MCF 10A (cell line): ENCODE measurements at regions of chr15 and their contacts with region 1.

Region 1: DNA sequence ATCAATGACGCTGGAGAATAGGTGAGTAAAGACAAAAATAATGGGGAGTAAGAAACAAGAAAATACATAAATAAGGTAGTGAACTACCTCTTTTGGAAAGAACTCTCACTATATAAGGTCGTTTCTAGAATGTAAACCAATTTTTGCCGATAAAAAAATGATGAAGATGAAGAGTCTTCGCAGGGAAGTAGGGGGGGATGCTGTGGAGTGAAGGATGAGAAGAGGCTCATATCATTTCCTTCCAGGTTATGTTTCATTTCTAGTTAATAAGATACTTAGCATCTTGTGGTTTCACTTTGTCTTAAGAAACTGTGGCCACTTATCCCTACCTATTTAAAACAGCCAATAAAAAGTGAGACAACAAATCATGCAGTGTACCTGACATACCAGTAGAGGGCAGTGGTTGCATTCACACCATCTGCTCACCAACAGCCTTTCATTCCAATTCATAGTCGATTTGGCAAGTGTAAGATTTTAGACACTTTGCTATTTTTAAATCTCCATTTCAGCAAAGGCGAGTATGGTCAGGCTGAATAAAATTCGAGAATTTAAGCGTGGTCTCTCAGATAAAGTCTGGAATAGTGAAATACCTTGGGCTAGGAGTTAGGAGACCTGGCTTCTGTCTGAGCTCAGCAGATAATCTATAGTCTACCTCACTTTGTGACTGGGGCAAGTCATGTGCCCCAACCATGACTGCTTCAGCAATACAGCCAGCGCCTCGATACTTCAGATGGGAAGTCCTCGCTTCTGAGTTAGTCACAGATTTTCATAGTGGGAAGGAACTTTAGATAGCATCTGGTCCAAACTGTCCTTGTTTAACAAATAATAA is 28.9 kb upstream of the ICE2 start:
- DNase-seq: peak; percentile 76
- H3K4me3 Mint-ChIP-seq: no peak overlapping the region
- H3K27ac Mint-ChIP-seq: no peak overlapping the region
- H3K4me1 Mint-ChIP-seq: no peaks in the 10 kb centered on the region
- H3K27me3 Mint-ChIP-seq: no peaks in the 10 kb centered on the region
- CTCF ChIP-seq: peak; percentile 87

Region 2: GRCh38 chr15:60496853-60497252 is 11.0 kb before region 1 on chr15:
- CTCF ChIA-PET with region 1: interaction called, 28 read pairs
- POLR2A ChIA-PET with region 1: interaction called, 4 read pairs
- intact Hi-C with region 1: no loop called
- DNase-seq: no peak
- H3K4me3 Mint-ChIP-seq: no peak overlapping the region
- H3K27ac Mint-ChIP-seq: no peak overlapping the region
- H3K4me1 Mint-ChIP-seq: no peaks in the 10 kb centered on the region
- H3K27me3 Mint-ChIP-seq: no peaks in the 10 kb centered on the region
- CTCF ChIP-seq: no peak

Region 3: GRCh38 chr15:60520825-60521368 is 13.1 kb after region 1 on chr15:
- CTCF ChIA-PET with region 1: interaction called, 125 read pairs
- POLR2A ChIA-PET with region 1: interaction called, 10 read pairs
- intact Hi-C with region 1: no loop called
- DNase-seq: peak; percentile 75
- H3K4me3 Mint-ChIP-seq: no peak overlapping the region
- H3K27ac Mint-ChIP-seq: peak overlapping the region; percentile 73
- H3K4me1 Mint-ChIP-seq: peaks cover 40% of the 10 kb centered on the region
- H3K27me3 Mint-ChIP-seq: no peaks in the 10 kb centered on the region
- CTCF ChIP-seq: peak; percentile 79

Region 4: DNA sequence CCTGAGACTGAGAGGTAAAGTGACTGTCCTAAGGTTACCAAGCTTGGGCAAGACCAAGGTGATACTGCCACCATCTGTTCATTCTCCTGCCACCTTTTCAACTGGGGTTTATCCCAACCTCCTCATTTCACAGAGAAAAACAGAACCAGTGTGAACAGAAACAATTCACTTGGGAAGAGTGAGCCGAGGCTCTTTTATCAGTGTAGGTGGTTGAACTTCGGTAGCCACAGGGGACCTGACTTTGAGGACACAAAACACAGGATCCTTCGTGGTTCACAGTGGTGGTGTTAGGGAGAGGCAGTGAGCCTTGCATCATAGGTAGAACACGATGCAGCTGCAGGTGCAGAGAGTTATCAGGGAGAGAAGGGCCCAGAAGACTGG is 44.0 kb after region 1 on chr15:
- CTCF ChIA-PET with region 1: interaction called, 4 read pairs
- POLR2A ChIA-PET with region 1: interaction called, 4 read pairs
- intact Hi-C with region 1: loop called (anchors 1 kb)
- DNase-seq: peak; percentile 47
- H3K4me3 Mint-ChIP-seq: no peak overlapping the region
- H3K27ac Mint-ChIP-seq: no peak overlapping the region
- H3K4me1 Mint-ChIP-seq: no peaks in the 10 kb centered on the region
- H3K27me3 Mint-ChIP-seq: no peaks in the 10 kb centered on the region
- CTCF ChIP-seq: peak; percentile 12

Region 5: DNA sequence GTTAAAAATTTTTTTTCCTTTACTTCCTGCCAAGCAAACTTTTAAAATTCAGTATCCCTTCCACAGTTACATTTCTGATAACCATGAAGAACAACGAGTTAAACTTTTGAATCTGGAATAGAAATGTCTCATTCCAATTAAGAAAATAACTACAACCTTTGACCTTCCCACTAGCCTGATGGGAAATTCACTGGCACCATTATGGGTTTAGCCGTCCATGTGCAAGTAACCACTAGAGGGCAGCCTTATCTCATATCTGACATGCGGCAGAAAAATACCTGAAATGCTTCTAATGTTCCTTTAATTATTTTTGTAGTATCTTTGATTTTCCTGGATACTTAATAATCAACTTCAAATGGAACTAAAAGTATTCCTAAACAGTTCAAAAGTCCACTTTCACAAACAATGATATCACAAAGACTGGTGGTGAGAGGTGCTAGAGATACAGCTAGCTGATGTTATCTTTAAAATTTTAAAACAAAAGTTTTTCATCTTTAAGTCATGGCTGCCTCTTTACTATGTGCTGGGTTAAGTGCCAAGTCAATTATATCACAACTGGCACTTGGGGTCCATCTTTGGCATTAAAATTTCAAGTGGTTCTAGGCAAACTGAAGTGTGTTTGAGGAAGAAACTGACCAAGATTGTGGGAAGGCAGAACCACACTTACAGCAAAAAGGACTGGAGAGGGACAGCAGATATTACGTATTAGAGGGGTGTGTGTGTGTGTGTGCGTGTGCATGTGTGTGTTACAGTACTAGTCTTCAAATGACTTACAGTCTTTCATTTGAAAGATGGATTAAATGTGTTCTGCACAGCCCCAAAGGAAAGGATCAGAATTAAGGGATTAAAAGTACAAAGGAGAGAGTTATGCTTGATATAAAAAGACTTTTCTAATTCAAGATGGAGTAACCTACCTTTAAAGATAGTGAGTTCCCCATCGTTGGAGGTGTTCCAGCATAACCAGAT is 78.2 kb after region 1 on chr15:
- CTCF ChIA-PET with region 1: interaction called, 7 read pairs
- POLR2A ChIA-PET with region 1: interaction called, 5 read pairs
- intact Hi-C with region 1: loop called (anchors 2 kb)
- DNase-seq: peak; percentile 75
- H3K4me3 Mint-ChIP-seq: no peak overlapping the region
- H3K27ac Mint-ChIP-seq: no peak overlapping the region
- H3K4me1 Mint-ChIP-seq: no peaks in the 10 kb centered on the region
- H3K27me3 Mint-ChIP-seq: no peaks in the 10 kb centered on the region
- CTCF ChIP-seq: peak; percentile 84

Region 6: GRCh38 chr15:60916679-60917460 is 409.1 kb after region 1 on chr15:
- CTCF ChIA-PET with region 1: interaction called, 7 read pairs
- POLR2A ChIA-PET with region 1: no interaction called
- intact Hi-C with region 1: loop called (anchors 5 kb)
- DNase-seq: peak; percentile 80
- H3K4me3 Mint-ChIP-seq: no peak overlapping the region
- H3K27ac Mint-ChIP-seq: no peak overlapping the region
- H3K4me1 Mint-ChIP-seq: no peaks in the 10 kb centered on the region
- H3K27me3 Mint-ChIP-seq: no peaks in the 10 kb centered on the region
- CTCF ChIP-seq: peak; percentile 74

Region 7: GRCh38 chr15:61051569-61052031 is 543.8 kb after region 1 on chr15:
- CTCF ChIA-PET with region 1: interaction called, 3 read pairs
- POLR2A ChIA-PET with region 1: no interaction called
- intact Hi-C with region 1: loop called (anchors 5 kb)
- DNase-seq: peak; percentile 58
- H3K4me3 Mint-ChIP-seq: no peak overlapping the region
- H3K27ac Mint-ChIP-seq: no peak overlapping the region
- H3K4me1 Mint-ChIP-seq: peaks cover 23% of the 10 kb centered on the region
- H3K27me3 Mint-ChIP-seq: no peaks in the 10 kb centered on the region
- CTCF ChIP-seq: peak; percentile 56